Cardiac septum (tissue), 1 donor: ENCODE measurements at regions of chr1 and their contacts with region 1.

Region 1: DNA sequence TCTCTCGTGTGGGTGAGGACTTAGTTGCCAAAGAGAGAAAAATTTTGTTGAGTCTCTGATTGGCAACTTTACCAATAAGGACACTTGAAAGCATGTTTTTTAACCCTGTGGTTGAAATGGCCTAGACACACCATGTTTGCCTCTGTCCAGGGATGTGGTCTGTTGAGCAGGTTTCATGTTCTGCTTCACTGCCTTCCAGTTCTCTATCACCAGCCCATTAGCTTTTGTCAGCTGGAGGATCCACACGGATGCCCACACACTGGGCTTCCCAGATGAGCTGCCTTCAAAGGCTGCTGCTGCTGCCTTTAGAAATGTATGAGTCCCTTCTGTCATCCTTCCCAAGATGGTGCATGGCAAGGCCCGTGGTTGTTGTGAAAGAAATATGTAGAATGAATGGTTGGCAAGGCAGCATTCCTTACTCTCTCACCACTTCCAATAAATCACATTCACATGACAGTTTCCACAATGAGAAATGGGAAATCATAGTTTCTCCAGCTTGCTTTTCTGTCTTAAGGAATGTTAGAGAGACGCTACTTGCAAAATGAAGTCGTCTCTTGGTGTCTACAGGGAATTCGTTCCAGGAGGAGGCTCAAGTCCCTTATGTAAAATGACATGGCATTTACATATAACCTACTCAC is 108.2 kb upstream of the SLC35F3 start:
- DNase-seq: no peak

Region 2: DNA sequence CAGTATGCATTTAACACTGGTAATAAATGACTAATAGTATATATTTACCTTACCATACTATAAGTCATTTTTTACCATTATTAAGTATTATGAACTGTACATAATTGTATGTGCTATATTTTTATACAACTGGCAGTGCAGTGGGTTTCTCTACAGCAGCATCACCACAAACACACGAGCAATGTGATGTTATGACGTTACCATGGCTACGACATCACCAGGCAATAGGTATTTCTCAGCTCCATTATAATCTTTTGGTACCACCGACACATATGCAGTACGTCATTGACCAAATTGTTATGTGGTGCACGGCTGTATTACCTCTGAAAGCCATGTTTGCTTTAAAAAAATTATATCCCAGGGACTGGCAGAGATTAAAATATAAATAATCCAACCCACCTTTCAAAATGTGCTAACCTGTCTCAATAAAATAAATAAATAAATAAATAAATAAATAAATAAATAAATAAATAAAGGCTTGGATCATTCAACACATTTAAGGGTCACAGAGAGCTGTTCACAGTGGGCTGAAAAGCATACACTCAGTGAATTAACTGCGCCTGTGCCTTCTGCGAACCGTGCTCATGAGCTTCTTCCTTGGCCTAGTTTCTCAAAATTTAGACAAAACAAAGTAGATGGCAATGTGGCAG is 13.2 kb before region 1 on chr1:
- intact Hi-C with region 1: loop called (anchors 2 kb)
- DNase-seq: no peak